ENCODE measurements at regions of chr16 and their contacts with region 1.

Region 1: GRCh38 chr16:15682105-15682570 is 32.1 kb downstream of the NDE1 start:
- H3K4me3 ChIP-seq: no peak overlapping the region
- H3K27ac ChIP-seq: no peak overlapping the region
- H3K4me1 ChIP-seq: no peaks in the 10 kb centered on the region
- CTCF ChIP-seq: no peak

Region 2: DNA sequence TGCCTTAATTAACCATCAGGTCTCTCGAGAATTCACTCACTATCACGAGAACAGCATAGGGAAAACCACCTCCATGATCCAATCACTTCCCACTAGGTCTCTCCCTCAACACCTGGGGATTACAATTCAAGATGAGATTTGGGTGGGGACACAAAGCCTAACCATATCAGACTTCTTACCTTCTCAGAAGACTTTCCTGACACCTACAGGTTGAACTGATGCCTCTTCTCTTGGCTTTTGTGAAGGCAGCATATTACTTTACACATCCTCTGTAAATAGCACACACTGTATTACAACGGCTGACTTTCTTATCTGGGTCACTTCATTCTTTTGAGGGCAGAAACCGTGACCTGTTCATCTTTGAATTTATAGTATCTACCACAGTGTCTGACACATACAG is 224.2 kb before region 1 on chr16:
- CTCF ChIA-PET with region 1: no interaction called
- POLR2A ChIA-PET with region 1: no interaction called
- H3K4me3 ChIP-seq: no peak overlapping the region
- H3K27ac ChIP-seq: no peak overlapping the region
- H3K4me1 ChIP-seq: no peaks in the 10 kb centered on the region
- CTCF ChIP-seq: no peak

Region 3: DNA sequence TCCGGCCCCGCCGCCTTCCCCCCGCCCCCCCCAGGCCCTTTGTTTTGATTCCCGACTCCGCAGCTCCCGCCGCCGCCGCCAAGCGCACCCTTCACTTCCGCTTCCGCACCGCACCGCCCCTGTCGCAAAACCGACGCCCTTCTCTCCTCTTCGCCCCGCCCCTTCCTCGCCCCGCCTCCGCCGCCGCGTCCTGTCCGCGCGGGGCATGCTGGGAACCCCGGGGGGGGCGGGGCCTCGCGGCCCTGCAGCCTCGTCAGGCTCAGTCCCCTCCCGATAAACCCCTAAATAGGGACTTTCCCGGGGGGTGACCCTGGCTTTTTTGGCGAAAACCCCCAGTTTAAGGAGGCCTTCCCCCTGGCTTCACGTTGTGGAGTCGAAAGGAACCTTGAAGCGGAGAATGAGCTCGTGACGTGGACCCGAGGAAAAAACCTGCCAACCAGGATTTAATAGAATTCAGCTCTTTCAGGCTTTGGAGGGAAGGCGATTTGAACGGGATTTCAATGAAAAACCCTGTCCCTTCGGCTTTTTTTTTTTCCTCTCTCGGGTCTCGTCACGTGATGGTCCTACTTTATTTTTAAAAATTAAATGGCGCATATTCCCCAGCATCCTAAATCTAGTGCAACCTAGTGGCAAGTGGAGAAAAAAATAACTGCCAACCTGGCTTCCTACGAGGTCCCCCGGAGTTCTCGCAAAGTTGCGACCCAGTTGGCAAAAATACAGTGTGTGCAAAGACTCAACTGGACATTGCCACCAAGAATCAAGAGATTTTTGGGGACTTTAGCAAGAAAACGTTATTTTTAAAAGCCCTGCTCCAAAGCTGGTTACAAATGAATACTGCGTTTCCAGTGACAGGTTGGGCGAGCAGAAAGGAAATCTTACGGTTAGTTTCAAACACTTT is 38.8 kb before region 1 on chr16 and contains the start of gene MARF1:
- CTCF ChIA-PET with region 1: interaction called, 10 read pairs
- POLR2A ChIA-PET with region 1: interaction called, 4 read pairs
- H3K4me3 ChIP-seq: peak within 1 kb of the TSS; percentile 99
- H3K27ac ChIP-seq: peak within 1 kb of the TSS; percentile 98
- H3K4me1 ChIP-seq: peaks cover 15% of the 10 kb centered on the region
- CTCF ChIP-seq: peak; percentile 45; the same call in 1 of the 2 replicates

Region 4: GRCh38 chr16:15704545-15704987 is 22.4 kb after region 1 on chr16:
- CTCF ChIA-PET with region 1: interaction called, 10 read pairs
- POLR2A ChIA-PET with region 1: no interaction called
- H3K4me3 ChIP-seq: no peak overlapping the region
- H3K27ac ChIP-seq: no peak overlapping the region
- H3K4me1 ChIP-seq: no peaks in the 10 kb centered on the region
- CTCF ChIP-seq: peak; percentile 56